PC-9 (cell line): ENCODE measurements at regions of chr5 and their contacts with region 1.

Region 1: GRCh38 chr5:139341650-139342422 is at the start of gene PAIP2:
- DNase-seq: peak; percentile 89 to 95
- H3K4me3 ChIP-seq: peak within 1 kb of the TSS; percentile 77
- H3K27ac ChIP-seq: peak within 1 kb of the TSS; percentile 68
- H3K4me1 ChIP-seq: peaks cover 23% of the 10 kb centered on the region
- H3K27me3 ChIP-seq: no peaks in the 10 kb centered on the region
- CTCF ChIP-seq: peak; percentile 66
- total RNA-seq, gene PAIP2: 79.4 and 90.5 TPM in 2 replicates

Region 2: DNA sequence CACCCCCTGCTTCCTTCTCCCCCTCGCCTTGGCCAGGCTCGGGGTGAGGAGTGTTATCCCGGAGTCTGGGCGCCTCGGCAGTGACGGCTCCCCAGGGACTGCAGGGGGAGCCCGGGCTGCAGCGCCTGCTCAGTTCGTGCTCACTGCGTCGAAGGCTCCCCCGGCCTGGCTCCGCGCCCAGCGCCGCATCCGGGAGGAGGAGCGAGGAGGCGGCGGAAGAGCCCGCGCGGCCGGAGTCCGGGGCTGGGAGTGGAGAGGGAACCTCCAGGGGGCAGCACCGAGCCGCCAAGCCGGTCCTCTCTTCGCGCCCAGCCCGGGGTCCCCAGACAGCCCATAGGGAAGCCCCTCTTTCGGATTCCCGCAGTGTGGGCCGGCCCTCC is 877.8 kb before region 1 on chr5:
- CTCF ChIA-PET with region 1: no interaction called
- POLR2A ChIA-PET with region 1: interaction called, 21 read pairs
- intact Hi-C with region 1: no loop called
- DNase-seq: peak; percentile 78 to 94
- H3K4me3 ChIP-seq: peak overlapping the region; percentile 80
- H3K27ac ChIP-seq: peak overlapping the region; percentile 81
- H3K4me1 ChIP-seq: peaks cover 6% of the 10 kb centered on the region
- H3K27me3 ChIP-seq: no peaks in the 10 kb centered on the region
- CTCF ChIP-seq: peak; percentile 93

Region 3: GRCh38 chr5:139368613-139369012 is 26.8 kb after region 1 on chr5:
- CTCF ChIA-PET with region 1: no interaction called
- POLR2A ChIA-PET with region 1: interaction called, 19 read pairs
- intact Hi-C with region 1: no loop called
- DNase-seq: no peak
- H3K4me3 ChIP-seq: no peak overlapping the region
- H3K27ac ChIP-seq: no peak overlapping the region
- H3K4me1 ChIP-seq: peaks cover 20% of the 10 kb centered on the region
- H3K27me3 ChIP-seq: no peaks in the 10 kb centered on the region
- CTCF ChIP-seq: peak; percentile 23; the same call in 1 of the 2 replicates

Region 4: GRCh38 chr5:139403787-139404483 is 62.1 kb after region 1 on chr5 and contains the start of gene SPATA24:
- CTCF ChIA-PET with region 1: interaction called, 12 read pairs
- POLR2A ChIA-PET with region 1: no interaction called
- intact Hi-C with region 1: no loop called
- DNase-seq: peak; percentile 91 to 95
- H3K4me3 ChIP-seq: peak within 1 kb of the TSS; percentile 67
- H3K27ac ChIP-seq: peak within 1 kb of the TSS; percentile 78
- H3K4me1 ChIP-seq: peaks cover 15% of the 10 kb centered on the region
- H3K27me3 ChIP-seq: no peaks in the 10 kb centered on the region
- CTCF ChIP-seq: no peak
- total RNA-seq, gene SPATA24: 6.5 and 9.6 TPM in 2 replicates

Region 5: DNA sequence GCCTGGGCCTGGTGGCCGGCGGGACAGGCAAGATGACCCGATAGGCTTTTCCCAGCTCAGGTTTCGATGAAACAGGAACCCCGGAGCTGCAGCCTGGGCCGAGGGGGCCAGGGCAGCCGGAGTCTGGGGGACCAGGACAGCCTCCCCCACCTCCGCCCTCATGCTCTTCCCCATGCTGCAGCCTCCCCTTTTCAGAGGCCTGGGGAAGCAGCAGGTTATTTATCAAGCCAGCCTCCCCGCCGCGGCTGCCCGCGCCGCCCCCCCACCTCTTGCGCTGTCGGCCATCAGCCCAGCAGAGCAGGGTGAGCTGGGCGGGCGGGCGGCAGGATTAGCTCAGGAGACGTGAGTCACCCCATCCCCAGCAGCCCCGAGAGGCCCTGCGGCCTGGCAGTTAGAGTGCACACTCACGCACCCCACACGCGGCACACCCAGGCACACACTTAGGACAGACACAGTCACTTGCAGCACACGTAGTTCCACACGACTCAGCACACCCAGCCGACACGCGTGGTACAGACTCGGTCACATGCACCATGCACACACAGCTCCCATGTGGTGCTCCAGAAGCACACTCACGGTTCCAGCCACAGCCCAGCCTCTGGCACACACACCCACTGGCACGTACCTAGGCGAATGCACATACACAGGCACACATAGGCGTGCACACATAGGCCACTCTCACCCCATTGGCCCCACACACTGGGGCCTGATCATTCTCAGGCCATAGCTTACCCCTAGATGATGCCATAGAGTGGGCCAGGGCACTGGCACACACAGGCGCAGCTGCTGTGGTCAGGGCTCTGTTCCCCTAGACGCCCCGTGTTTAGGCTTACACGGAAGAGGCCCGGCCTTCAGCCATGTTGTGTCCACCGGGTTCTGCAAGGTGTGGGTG is 319.3 kb after region 1 on chr5:
- CTCF ChIA-PET with region 1: no interaction called
- POLR2A ChIA-PET with region 1: interaction called, 15 read pairs
- intact Hi-C with region 1: no loop called
- DNase-seq: peak; percentile 87 to 90
- H3K4me3 ChIP-seq: peak overlapping the region; percentile 52; the same call in 1 of the 2 replicates
- H3K27ac ChIP-seq: peak overlapping the region; percentile 78
- H3K4me1 ChIP-seq: peaks cover 78% of the 10 kb centered on the region
- H3K27me3 ChIP-seq: no peaks in the 10 kb centered on the region
- CTCF ChIP-seq: no peak